Caco-2 (cell line): ENCODE measurements at regions of chr15 and their contacts with region 1.

Region 1: GRCh38 chr15:67240235-67241131 is 14.0 kb downstream of the AAGAB start:
- DNase-seq: peak in 1 of 2 experiments; percentile 17
- H3K4me3 ChIP-seq: no peak overlapping the region
- H3K4me3 Mint-ChIP-seq: no peak overlapping the region
- H3K27ac Mint-ChIP-seq: no peak overlapping the region
- H3K4me1 ChIP-seq: no peaks in the 10 kb centered on the region
- H3K4me1 Mint-ChIP-seq: no peaks in the 10 kb centered on the region
- H3K27me3 ChIP-seq: no peaks in the 10 kb centered on the region
- H3K27me3 Mint-ChIP-seq: no peaks in the 10 kb centered on the region
- CTCF ChIP-seq: peak in 1 of 2 experiments; percentile 37

Region 2: DNA sequence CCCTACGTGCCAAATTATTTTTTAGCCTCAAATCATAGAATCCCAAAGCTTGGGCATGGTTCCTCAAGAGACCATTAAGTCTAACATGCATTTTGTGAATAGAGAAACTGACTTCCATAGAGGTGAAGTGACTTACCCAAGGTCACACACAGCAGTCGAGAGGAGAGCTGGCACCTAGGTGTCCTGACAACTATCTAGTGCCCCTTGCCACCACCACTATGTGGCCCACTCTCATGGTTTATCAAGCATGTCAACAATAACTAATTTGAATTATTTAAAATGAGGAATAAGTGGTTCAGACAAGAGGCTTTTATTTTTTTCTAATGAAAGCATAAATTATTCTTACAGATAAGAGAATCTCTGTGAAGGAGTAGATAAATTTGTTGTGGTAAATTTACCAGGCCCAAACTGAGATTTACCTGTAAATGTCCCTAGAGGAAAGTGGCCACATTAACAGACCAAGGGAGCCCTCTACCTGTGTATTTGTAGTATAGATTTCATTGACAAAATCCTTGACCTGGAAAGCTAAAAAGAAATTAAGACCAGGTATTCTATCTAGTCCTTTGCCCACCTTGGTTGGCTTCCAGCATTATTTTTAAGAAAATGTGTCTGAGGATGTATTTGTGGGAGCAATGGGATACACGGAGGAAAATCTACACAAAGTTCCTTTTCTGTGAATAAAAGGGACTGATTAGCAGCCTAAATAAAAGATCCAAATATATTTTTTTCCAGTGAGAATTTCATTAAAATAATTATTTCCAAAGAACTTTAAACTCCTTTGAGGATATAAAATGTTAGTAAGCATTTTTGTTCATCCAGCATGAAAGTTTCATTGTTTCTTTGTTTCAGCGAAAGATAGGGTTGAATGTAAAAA is 63.2 kb after region 1 on chr15:
- CTCF ChIA-PET with region 1: interaction called, 5 read pairs
- POLR2A ChIA-PET with region 1: no interaction called
- intact Hi-C with region 1: loop called (anchors 5 kb)
- DNase-seq: peak; percentile 35 to 38
- H3K4me3 ChIP-seq: no peak overlapping the region
- H3K4me3 Mint-ChIP-seq: no peak overlapping the region
- H3K27ac Mint-ChIP-seq: no peak overlapping the region
- H3K4me1 ChIP-seq: no peaks in the 10 kb centered on the region
- H3K4me1 Mint-ChIP-seq: no peaks in the 10 kb centered on the region
- H3K27me3 ChIP-seq: no peaks in the 10 kb centered on the region
- H3K27me3 Mint-ChIP-seq: no peaks in the 10 kb centered on the region
- CTCF ChIP-seq: peak; percentile 41 to 66

Region 3: DNA sequence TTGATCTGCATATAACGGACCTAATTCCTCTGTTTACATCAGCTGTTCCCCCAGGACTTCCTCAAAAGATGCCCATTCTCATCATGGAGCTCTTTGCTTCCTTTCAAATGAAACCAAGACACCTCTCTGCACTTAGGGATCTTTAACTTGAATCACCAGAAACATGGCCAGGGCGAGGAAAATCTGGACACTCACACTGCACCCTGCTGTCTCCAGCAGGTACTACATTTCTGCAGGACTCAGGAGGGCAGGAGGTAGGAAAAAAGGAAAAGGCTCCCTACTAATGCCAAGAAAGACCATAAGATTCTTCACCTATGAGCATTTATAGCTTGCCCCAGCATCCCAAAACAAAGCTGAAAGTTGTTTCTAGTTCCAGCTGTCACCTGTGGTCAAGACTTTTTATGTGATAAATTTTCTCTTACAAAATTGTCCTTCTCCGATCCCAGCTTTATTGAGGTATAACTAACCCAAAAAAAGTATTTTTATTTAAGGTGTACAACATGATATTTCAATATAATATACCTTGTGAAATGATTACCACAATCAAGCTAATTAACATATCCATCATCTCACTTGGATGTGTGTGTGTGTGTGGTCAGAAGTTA is 193.1 kb after region 1 on chr15:
- CTCF ChIA-PET with region 1: no interaction called
- POLR2A ChIA-PET with region 1: no interaction called
- intact Hi-C with region 1: loop called (anchors 5 kb)
- DNase-seq: peak in 1 of 2 experiments; percentile 59
- H3K4me3 ChIP-seq: no peak overlapping the region
- H3K4me3 Mint-ChIP-seq: no peak overlapping the region
- H3K27ac Mint-ChIP-seq: no peak overlapping the region
- H3K4me1 ChIP-seq: no peaks in the 10 kb centered on the region
- H3K4me1 Mint-ChIP-seq: no peaks in the 10 kb centered on the region
- H3K27me3 ChIP-seq: no peaks in the 10 kb centered on the region
- H3K27me3 Mint-ChIP-seq: no peaks in the 10 kb centered on the region
- CTCF ChIP-seq: peak; percentile 69 to 81